Sigmoid colon (tissue), 7 donors: ENCODE measurements at regions of chr5 and their contacts with region 1.

Region 1: GRCh38 chr5:179763215-179763945 is 30.4 kb upstream of the LTC4S start:
- DNase-seq: peak; percentile 82
- H3K4me3 ChIP-seq: no peak overlapping the region
- H3K27ac ChIP-seq: peak overlapping the region; percentile 52 to 78 (median 61)
- H3K4me1 ChIP-seq: peaks cover 0 to 82% (median 68%) of the 10 kb centered on the region in 4 donors
- H3K27me3 ChIP-seq: no peaks in the 10 kb centered on the region
- CTCF ChIP-seq: peak; percentile 69 to 86 (median 80)
- EP300 ChIP-seq: no peak
- POLR2A ChIP-seq: no peak

Region 2: DNA sequence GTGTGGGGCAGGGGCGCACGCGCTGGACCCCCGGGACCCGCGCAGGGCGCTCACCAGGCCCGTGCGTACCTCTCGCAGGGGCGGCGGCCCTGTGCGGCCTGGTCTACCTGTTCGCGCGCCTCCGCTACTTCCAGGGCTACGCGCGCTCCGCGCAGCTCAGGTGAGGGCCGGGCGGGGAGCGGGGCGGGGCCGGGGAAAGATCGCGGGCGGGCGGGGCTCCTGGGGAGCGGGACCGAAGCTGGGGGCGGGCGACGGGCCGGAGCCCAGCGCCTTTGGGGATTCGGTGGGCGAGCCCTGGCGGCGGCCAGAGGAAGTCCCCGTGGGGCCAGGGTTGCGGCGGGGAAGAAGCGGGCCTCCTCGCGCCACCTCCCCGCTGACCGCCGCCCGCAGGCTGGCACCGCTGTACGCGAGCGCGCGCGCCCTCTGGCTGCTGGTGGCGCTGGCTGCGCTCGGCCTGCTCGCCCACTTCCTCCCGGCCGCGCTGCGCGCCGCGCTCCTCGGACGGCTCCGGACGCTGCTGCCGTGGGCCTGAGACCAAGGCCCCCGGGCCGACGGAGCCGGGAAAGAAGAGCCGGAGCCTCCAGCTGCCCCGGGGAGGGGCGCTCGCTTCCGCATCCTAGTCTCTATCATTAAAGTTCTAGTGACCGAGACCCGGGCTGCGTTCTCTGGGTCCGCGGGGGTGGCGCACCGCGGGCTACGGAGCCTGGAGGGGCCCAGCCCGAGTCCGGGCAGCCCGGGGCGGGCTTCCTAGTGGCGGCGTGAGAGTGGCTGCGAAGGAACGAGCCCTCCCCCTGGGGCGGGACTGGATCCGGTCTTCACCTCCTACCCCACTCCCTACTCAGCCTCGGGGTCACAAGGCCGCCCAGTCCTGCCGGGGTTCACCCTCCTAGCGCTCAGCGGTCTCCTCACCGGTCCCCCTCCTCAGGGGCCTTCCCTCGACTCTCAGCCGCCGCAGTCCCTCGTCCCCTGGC is 32.8 kb after region 1 on chr5:
- intact Hi-C with region 1: loop called (anchors 2 kb)
- DNase-seq: peak; percentile 87
- H3K4me3 ChIP-seq: peak overlapping the region; percentile 38 to 67 (median 63)
- H3K27ac ChIP-seq: peak overlapping the region; percentile 82 to 87 (median 84)
- H3K4me1 ChIP-seq: peaks cover 0 to 40% (median 33%) of the 10 kb centered on the region in 4 donors
- H3K27me3 ChIP-seq: no peaks in the 10 kb centered on the region
- CTCF ChIP-seq: peak; percentile 10 to 89 (median 26)
- EP300 ChIP-seq: no peak
- POLR2A ChIP-seq: peak; percentile 12 to 20

Region 3: DNA sequence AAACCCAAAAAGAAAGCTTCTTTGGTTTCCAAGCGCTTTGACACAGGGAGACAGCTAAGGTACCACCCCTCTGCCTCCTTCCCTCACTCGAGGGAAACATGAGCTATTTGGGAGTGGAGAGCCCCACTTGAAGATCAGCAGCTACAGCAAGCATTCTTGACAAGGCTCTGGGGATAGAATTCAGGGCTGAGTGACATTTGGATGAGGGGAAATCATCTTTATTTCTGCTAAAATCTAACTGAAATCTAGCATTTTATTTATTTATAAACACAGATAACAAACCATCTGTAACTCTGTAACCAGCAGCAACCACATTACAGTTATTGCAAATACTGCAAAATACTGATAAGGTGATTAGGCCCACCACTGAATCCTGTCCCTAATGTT is 285.8 kb after region 1 on chr5:
- intact Hi-C with region 1: no loop called
- DNase-seq: no peak
- H3K4me3 ChIP-seq: no peak overlapping the region
- H3K27ac ChIP-seq: no peak overlapping the region
- H3K4me1 ChIP-seq: peaks cover 0 to 50% (median 43%) of the 10 kb centered on the region in 4 donors
- H3K27me3 ChIP-seq: no peaks in the 10 kb centered on the region
- CTCF ChIP-seq: no peak
- EP300 ChIP-seq: no peak
- POLR2A ChIP-seq: no peak